Aorta (tissue), 5 donors: ENCODE measurements at regions of chr2 and their contacts with region 1.

Region 1: DNA sequence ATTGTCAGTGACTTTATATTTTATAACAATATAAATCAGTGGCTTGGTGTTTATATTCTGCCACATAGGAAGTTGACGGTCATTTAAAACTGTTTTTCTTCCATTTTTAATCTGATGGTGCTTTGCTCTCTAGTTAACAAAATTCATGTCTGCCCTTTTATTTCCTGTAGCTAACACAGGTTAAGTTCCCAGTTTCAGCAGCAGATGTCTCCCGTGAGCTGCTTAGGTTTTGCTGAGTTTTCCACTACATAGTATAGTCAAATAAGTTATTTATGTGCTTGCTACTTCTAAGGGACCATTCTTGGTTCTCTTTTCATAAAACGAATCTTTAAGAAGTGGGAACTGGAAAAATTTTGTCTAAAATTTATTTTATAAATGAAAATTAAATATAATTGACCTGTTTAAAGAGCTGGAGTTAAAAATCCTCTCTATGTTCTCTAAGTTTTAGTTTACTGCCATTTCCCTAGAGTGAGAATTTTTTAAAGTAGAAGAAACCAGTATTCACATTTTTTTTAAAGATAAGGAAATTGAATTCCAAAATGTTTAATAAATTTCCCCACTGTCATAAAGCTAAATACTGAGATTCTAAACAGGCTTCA is 20.6 kb downstream of the HTR2B start:
- DNase-seq: peak in 1 of 2 donors; percentile 66
- ATAC-seq: peak; percentile 81
- H3K4me3 ChIP-seq: no peak overlapping the region
- H3K27ac ChIP-seq: no peak overlapping the region
- H3K4me1 ChIP-seq: no peaks in the 10 kb centered on the region
- H3K27me3 ChIP-seq: no peaks in the 10 kb centered on the region

Region 2: GRCh38 chr2:230932556-230933511 is 171.4 kb before region 1 on chr2:
- intact Hi-C with region 1: no loop called
- DNase-seq: peak in 1 of 2 donors; percentile 70
- ATAC-seq: peak; percentile 60
- H3K4me3 ChIP-seq: no peak overlapping the region
- H3K27ac ChIP-seq: no peak overlapping the region
- H3K4me1 ChIP-seq: no peaks in the 10 kb centered on the region
- H3K27me3 ChIP-seq: no peaks in the 10 kb centered on the region

Region 3: DNA sequence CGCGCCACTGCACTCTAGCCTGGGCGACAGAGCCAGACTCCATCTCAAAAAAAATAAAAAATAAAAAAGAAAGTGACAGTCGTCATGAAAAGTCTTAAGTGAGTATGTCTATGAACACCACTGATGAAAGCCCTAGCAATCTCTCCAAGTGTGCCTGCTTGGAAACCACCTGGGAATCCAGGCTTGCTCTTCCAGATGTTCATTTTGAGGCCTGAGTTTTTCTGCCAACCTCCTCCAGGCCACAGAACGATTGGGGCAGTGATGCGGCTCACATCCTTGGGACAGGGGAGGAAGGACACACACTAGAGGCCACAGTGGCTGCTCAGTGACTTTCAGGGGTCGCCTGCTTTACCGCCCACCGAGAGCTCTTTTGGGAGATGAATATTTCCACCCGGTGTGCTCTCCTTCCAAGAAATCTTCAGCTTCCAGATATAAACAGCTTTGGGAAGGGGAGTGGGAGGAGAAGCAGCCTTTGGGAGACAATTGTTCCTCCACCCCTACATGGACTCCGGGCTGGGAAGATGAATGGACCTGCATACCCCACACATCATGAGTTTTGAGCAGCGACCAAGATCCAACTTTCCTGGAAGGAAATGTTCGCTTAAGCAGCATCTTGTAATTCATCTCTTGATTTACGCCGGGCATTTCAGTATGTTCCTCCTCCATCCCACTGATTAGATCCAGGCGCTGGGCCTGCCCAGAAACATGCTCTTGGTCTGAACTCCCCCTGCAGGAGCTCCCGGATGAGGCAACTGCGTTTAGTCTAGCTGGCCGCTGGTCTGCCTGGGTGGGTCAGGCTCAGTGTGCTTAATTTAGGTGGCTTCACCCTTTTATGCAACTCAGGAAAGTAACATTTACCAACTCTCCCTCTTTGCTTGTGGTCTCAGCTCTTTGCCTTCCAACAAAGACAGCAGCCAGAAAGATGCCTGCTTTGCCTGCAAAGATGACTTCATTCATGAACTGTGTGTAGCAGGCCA is 88.0 kb after region 1 on chr2:
- intact Hi-C with region 1: loop called (anchors 2 kb)
- DNase-seq: peak; percentile 93 to 94
- ATAC-seq: peak; percentile 78
- H3K4me3 ChIP-seq: no peak overlapping the region
- H3K27ac ChIP-seq: peak overlapping the region; percentile 69 to 99
- H3K4me1 ChIP-seq: no peaks in the 10 kb centered on the region
- H3K27me3 ChIP-seq: no peaks in the 10 kb centered on the region

Region 4: DNA sequence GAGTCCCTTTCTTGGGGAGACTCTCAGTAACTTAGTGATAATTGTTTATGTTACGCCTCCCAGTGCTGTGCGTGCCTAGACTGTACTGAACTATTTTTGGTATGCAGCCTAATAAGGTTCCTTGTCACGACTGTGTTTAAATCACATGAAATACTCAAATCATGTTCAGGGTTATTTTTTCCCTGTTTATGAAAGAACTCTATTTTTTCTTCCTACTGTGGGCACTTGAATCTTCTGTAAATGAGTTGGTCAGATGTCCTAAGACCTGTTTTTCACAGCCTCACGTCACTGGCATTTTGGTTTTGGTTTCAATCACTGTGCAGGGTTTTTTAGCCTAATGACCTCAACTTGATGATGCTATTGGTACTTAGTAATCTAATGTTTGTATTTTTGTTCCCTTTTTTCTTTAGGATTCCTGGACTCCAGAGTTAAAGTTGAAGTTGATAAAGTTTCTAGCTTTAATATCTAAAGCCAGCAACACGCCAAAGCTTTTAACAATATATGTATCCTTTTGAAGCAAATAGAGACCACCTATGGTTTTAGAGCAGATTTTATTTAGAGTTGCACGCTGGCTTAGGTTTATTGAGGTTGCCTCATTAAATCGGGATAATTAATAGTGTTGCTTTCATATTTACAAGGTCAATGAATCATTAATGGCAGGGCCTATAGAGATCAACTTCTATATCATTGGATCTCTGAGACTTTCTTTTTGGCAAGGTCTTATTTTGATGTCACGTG is 118.3 kb after region 1 on chr2:
- intact Hi-C with region 1: loop called (anchors 2 to 5 kb)
- DNase-seq: no peak
- ATAC-seq: peak; percentile 82
- H3K4me3 ChIP-seq: no peak overlapping the region
- H3K27ac ChIP-seq: peak overlapping the region; percentile 5 to 84
- H3K4me1 ChIP-seq: peaks cover 0 to 2% of the 10 kb centered on the region in 2 donors
- H3K27me3 ChIP-seq: no peaks in the 10 kb centered on the region

Region 5: GRCh38 chr2:231227309-231228162 is 123.3 kb after region 1 on chr2:
- intact Hi-C with region 1: loop called (anchors 2 to 5 kb)
- DNase-seq: peak in 1 of 2 donors; percentile 61
- ATAC-seq: peak; percentile 90
- H3K4me3 ChIP-seq: no peak overlapping the region
- H3K27ac ChIP-seq: peak overlapping the region in 1 of 2 donors; percentile 60
- H3K4me1 ChIP-seq: peaks cover 0 to 2% of the 10 kb centered on the region in 2 donors
- H3K27me3 ChIP-seq: no peaks in the 10 kb centered on the region

Region 6: GRCh38 chr2:231411831-231412617 is 307.8 kb after region 1 on chr2:
- intact Hi-C with region 1: loop called (anchors 5 to 10 kb)
- DNase-seq: peak; percentile 93 to 95
- ATAC-seq: peak; percentile 98
- H3K4me3 ChIP-seq: peak overlapping the region; percentile 28 to 41
- H3K27ac ChIP-seq: no peak overlapping the region
- H3K4me1 ChIP-seq: peaks cover 0 to 2% of the 10 kb centered on the region in 2 donors
- H3K27me3 ChIP-seq: no peaks in the 10 kb centered on the region

Region 7: DNA sequence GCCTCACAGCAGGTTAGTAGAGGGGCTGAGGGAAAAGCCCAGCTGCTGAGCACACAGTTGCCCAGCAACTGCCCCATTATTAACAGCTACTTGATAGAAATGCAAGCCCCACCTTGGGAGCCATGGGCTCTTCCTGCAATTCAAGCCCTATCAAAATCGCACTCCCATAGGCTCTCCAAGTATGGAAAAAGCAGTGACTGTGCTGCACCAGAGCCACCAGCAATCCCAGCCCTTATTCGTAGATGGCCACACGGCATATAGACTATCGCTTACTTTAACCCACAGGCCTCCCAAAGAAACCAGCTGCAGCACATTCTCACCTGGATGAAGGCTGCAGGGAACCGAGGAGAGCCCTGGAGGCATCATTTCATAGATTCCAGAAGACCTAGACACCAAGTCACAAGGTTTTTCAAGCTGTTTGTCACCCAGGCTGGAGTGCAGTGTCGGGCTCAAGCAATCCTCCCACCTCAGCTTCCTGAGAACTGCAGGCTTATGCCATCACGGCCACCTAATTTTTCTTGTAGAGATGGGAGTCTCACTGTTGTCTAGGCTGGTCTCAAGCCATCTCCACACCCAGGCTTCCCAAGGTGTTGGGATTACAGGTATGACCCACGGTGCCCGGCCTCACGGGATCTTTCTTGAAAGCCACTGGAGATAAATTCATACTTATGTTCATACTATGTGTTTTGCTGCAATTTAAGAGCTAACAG is 348.7 kb after region 1 on chr2:
- intact Hi-C with region 1: loop called (anchors 2 to 5 kb)
- DNase-seq: peak in 1 of 2 donors; percentile 57
- ATAC-seq: no peak
- H3K4me3 ChIP-seq: no peak overlapping the region
- H3K27ac ChIP-seq: no peak overlapping the region
- H3K4me1 ChIP-seq: no peaks in the 10 kb centered on the region
- H3K27me3 ChIP-seq: peaks cover 0 to 3% of the 10 kb centered on the region in 2 donors